MCF 10A (cell line): ENCODE measurements at regions of chr2 and their contacts with region 1.

Region 1: DNA sequence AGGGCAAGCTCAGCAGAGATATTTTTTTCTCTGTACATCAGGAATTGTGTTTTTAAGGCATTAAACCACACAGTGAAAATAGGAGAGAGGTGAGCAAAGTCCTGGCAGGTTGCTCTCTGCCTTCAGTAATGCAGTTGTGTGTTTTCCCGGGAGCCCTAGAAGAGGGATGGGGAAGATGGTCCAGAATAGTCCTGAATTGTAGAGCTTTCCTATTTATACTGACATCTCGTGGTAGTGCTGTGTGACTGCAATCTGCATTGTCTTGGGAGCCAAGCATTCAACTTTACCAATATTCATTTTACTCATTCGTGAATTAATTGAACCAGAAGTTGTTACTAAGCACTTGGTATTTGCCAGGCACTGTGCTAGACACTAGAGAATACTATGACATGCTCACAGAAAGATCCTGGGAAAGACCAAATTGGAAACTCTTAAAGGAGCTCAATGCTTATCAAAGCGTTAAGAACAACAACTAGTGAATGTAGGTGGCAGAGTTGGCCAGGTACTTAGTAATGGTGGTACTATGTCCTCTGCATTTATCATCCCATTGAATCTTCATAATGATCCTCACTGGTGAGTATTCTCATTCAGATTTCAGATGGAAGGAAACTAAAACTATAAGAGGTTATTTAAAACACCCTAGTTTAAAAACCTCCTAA is 214.6 kb downstream of the TRIB2 start:
- DNase-seq: peak; percentile 56
- H3K4me3 Mint-ChIP-seq: no peak overlapping the region
- H3K27ac Mint-ChIP-seq: no peak overlapping the region
- H3K4me1 Mint-ChIP-seq: peaks cover 19% of the 10 kb centered on the region
- H3K27me3 Mint-ChIP-seq: no peaks in the 10 kb centered on the region
- CTCF ChIP-seq: peak; percentile 87

Region 2: DNA sequence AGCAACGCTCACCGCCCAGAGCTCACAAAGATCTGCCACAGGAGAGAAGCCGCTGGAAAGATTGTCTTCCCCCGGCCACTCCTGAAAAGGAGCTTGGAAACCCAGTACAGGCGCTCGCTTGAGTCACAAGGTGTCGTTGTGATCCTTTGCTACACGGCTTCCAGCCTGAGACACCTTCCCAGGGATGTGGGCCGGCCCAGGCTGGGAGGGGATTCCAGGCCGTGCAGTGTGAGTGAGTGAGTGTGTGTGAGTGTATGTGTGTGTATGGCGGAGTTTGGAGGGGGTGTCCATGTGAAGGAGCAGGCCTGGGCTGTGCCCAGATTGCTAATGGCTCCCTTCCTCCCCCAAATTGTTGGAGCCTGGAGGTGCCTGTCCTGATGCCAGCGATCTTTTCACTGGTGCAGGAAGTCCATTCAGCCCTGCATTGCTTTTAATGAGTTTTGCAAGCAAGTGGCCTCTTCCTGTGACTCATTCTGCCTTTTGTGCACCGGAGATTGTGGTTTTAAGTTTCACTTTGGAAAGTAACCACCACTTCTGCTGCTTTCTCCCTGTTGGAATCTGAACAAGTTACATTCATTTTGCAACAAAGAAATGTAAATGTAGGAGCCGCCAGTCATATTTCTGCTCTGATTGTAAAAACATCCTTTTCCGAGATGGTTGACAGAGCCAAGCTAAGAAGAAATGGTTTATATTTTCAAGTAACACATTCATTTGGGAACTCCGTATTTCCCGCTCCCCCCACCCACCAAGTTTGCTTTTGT is 1101.2 kb before region 1 on chr2:
- CTCF ChIA-PET with region 1: interaction called, 77 read pairs
- POLR2A ChIA-PET with region 1: interaction called, 7 read pairs
- intact Hi-C with region 1: loop called (anchors 1 kb)
- DNase-seq: peak; percentile 98
- H3K4me3 Mint-ChIP-seq: peak overlapping the region; percentile 62
- H3K27ac Mint-ChIP-seq: peak overlapping the region; percentile 46
- H3K4me1 Mint-ChIP-seq: peaks cover 11% of the 10 kb centered on the region
- H3K27me3 Mint-ChIP-seq: no peaks in the 10 kb centered on the region
- CTCF ChIP-seq: peak; percentile 58

Region 3: DNA sequence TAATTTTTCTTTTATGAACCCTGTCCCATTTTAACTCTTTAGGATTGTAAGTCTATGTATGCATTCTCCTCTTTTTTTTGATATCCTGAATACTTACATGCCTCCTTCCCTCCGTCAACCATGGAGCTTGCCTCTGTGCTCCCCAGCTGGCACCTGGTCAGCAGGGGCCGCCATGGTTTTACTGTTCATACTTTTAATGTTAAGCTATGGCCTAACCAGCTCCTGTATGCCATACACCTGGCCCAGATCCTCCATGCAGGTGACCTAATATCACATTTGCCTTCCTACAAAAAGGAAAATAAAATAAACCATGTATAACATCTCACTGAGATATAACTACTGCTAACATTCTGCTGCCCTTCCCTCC is 497.7 kb before region 1 on chr2:
- CTCF ChIA-PET with region 1: no interaction called
- POLR2A ChIA-PET with region 1: interaction called, 3 read pairs
- intact Hi-C with region 1: loop called (anchors 1 kb)
- DNase-seq: peak; percentile 35
- H3K4me3 Mint-ChIP-seq: no peak overlapping the region
- H3K27ac Mint-ChIP-seq: no peak overlapping the region
- H3K4me1 Mint-ChIP-seq: peaks cover 15% of the 10 kb centered on the region
- H3K27me3 Mint-ChIP-seq: no peaks in the 10 kb centered on the region
- CTCF ChIP-seq: no peak

Region 4: DNA sequence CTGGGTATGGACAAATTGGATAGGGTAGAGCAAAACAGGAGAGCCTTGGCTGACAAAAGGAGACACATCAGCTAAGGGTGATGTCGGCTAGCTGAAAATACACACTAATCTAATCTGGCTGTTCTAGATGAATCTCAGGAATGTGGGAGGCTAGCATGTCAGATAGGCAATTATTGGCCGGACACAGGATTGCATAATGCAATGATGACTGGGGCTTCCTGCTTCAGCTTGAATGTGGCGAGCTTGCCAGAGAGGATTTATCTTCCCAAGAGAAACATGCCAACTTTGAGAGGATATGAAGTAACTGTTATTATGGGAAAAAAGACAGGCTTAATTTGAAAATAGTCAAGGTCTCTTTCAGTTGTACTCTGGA is 112.2 kb before region 1 on chr2:
- CTCF ChIA-PET with region 1: interaction called, 3 read pairs
- POLR2A ChIA-PET with region 1: no interaction called
- intact Hi-C with region 1: loop called (anchors 5 kb)
- DNase-seq: peak; percentile 98
- H3K4me3 Mint-ChIP-seq: peak overlapping the region; percentile 46
- H3K27ac Mint-ChIP-seq: peak overlapping the region; percentile 92
- H3K4me1 Mint-ChIP-seq: peaks cover 20% of the 10 kb centered on the region
- H3K27me3 Mint-ChIP-seq: no peaks in the 10 kb centered on the region
- CTCF ChIP-seq: no peak

Region 5: GRCh38 chr2:12918835-12919445 is 12.4 kb before region 1 on chr2:
- CTCF ChIA-PET with region 1: interaction called, 20 read pairs
- POLR2A ChIA-PET with region 1: interaction called, 5 read pairs
- intact Hi-C with region 1: no loop called
- DNase-seq: peak; percentile 18
- H3K4me3 Mint-ChIP-seq: no peak overlapping the region
- H3K27ac Mint-ChIP-seq: no peak overlapping the region
- H3K4me1 Mint-ChIP-seq: peaks cover 6% of the 10 kb centered on the region
- H3K27me3 Mint-ChIP-seq: no peaks in the 10 kb centered on the region
- CTCF ChIP-seq: no peak